Mucosa of descending colon (tissue), 3 donors: ENCODE measurements at regions of chr11 and their contacts with region 1.

Region 1: GRCh38 chr11:111283945-111284481 is 14.3 kb upstream of the POU2AF3 start:
- DNase-seq: peak; percentile 78 to 89 (median 80)
- ATAC-seq: peak; percentile 77
- H3K4me3 ChIP-seq: no peak overlapping the region
- H3K4me1 ChIP-seq: peaks cover 14% of the 10 kb centered on the region
- CTCF ChIP-seq: no peak

Region 2: DNA sequence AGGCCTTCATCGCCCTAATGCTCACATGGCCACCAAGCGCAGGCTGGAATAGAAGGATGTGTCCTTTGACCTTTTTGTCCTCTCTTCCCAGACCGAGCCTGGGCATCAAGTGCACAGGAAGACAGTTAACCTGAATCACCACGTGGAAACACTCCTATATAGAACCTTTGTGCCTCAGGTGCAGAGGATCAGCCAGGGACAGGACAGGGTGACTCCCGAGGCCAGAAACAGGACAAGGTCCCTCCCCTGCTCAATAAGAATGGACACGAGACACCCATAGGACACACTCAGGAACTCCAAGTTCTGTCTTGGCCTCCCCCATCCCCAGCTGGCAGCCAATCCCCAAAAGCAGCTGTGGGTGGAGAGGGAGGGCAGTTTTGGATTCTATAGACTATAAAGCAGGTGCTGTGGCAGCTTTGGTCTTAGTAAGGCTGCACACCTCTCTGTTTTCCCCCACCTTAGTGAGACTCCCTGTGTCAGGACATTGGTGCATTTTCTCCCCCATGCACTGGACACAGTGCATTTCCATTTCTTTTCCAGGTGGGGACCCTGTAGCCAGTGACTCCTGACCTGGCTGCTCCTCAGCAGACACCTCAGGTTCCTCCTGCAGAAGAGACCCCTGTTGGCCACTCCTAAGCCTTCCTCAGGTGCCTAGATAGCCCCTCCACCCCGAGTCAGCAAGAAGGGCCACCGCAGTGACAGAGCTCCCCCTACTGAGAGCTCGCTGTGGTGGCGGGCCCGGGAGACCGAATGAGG is 138.7 kb after region 1 on chr11:
- intact Hi-C with region 1: loop called (anchors 5 kb)
- DNase-seq: peak in 2 of 3 donors; percentile 79 to 83
- ATAC-seq: peak; percentile 84
- H3K4me3 ChIP-seq: no peak overlapping the region
- H3K4me1 ChIP-seq: peaks cover 20% of the 10 kb centered on the region
- CTCF ChIP-seq: peak; percentile 43

Region 3: GRCh38 chr11:111429066-111429506 is 145.1 kb after region 1 on chr11:
- intact Hi-C with region 1: loop called (anchors 5 kb)
- DNase-seq: peak in 1 of 3 donors; percentile 86
- ATAC-seq: peak; percentile 93
- H3K4me3 ChIP-seq: no peak overlapping the region
- H3K4me1 ChIP-seq: peaks cover 14% of the 10 kb centered on the region
- CTCF ChIP-seq: peak; percentile 19

Region 4: GRCh38 chr11:111446404-111447111 is 162.5 kb after region 1 on chr11:
- intact Hi-C with region 1: loop called (anchors 5 kb)
- DNase-seq: peak; percentile 74 to 89 (median 78)
- ATAC-seq: peak; percentile 99
- H3K4me3 ChIP-seq: no peak overlapping the region
- H3K4me1 ChIP-seq: peaks cover 8% of the 10 kb centered on the region
- CTCF ChIP-seq: peak; percentile 81

Region 5: DNA sequence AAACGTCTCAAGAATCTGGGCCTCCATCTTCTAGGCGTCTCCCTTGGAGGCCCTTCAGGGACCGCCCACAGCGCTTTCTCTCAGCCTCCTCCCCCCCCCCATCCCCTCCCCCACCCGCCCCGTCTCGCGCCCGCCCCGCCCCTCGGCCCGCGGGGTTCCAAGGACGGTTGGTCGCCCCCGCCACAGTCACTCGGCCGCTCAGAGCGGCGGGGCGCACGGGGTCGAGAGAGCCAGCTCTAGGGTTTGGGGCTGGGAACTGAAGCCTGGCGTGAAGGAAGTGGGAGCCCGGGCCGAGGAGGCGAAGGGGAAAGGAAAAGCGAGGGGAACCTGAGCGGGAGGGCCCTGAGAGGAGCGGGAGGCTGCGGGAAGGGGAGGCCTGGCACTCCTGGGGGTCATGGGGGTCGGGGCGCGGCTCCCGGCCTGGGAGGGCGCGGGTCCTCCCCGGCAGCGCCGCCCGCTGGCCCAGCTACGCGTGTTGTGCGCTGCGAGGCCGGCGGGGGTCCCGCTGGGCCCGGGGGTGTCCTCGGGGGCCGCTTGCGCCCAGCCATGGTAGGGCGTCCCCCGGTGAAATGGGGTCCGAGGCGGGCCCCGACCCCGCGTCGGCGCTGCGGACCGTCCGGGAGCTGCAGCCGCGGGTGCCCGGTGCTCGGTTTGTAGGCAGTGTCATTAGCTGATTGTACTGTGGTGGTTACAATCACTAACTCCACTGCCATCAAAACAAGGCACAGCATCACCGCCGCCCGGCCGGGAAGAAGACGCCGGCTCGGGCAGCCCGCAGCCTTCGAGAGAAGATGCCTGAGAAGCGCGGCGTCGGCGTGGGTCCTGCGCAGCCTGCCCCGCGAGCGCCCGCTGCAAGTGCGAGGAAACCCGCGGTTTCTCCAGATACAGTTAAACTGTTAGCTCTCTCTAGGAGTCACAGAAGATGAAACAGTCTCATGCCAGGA is 228.6 kb after region 1 on chr11 and contains the start of gene BTG4:
- intact Hi-C with region 1: no loop called
- DNase-seq: peak in 1 of 3 donors; percentile 24
- ATAC-seq: peak; percentile 24
- H3K4me3 ChIP-seq: no peak within 1 kb of the TSS
- H3K4me1 ChIP-seq: peaks cover 6% of the 10 kb centered on the region
- CTCF ChIP-seq: no peak
- total RNA-seq, gene BTG4: not detected